K562 (cell line): ENCODE measurements at regions of chr2 and their contacts with region 1.

Region 1: DNA sequence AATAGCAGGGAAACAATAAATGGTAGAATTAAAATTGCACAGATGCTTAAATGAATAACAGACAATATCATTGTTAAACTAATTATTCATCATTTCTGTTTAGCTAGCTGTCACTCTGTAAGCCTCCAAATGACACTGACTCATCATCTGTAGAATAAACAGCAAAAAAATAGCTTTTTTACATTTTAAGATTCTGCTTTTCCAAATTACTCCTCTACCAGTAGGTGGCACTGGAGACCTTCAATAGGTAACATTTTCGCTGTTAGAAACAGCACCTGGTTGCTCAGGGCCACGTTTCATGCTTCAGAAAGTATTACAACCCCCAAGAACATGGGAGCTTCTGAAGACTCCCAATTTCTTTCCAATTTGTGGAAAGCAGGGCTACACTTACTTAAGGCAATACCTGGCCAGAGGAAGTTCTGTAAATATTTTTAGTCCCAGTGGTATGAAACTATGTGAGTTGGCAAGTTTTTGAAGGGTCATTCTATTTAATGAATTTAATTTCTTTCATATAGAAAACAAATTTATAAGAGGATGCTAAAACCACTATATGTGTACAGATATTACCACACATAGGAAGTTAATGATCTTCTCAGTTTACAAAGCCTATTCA is 45.4 kb downstream of the TTN start:
- DNase-seq: peak; percentile 35 to 73 (median 46)
- ATAC-seq: peak; percentile 87
- H3K4me3 ChIP-seq: no peak overlapping the region
- H3K27ac ChIP-seq: no peak overlapping the region
- H3K4me1 ChIP-seq: no peaks in the 10 kb centered on the region
- H3K27me3 ChIP-seq: no peaks in the 10 kb centered on the region; a peak in 1 of 5 replicates
- CTCF ChIP-seq: peak; percentile 72 to 95 (median 82)
- EP300 ChIP-seq: no peak
- POLR2A ChIP-seq: no peak
- RAD21 ChIP-seq: peak; percentile 84 to 90

Region 2: DNA sequence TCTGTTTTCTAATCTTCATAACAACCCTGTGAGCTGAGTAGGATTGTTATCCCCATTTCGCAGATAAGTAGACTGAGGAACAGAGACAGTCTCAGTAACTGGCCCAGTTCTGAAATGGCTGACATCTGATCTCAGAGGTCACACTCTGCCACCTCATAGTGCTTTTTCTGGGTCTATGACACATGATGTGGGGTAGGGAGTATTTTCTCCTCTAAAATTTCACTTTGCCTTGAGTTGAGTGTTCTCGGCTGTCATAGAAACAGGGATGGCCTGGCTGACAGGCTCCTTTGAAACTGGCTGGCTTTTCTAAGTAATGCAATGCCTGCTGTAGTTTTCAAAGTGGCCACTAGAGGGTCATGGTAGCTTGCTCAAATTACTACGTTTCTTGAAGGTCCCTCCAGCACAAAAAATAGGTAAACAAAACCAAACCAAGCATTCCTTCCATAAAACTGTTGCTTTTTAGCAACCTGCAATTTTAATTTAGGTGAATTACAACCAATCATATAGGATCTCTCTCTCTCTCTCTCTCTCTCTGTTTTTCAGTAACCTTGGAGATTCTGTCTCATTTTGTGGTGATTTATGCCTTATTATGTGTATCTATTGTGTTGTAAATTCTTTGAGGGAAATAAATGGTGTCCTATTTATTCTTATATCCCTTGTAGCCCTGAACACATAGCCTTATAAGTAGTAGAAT is 129.5 kb after region 1 on chr2:
- CTCF ChIA-PET with region 1: no interaction called
- POLR2A ChIA-PET with region 1: no interaction called
- in situ Hi-C with region 1: no loop called
- intact Hi-C with region 1: loop called (anchors 2 kb)
- DNase-seq: peak; percentile 43 to 73 (median 71)
- ATAC-seq: peak; percentile 95
- H3K4me3 ChIP-seq: no peak overlapping the region
- H3K27ac ChIP-seq: no peak overlapping the region
- H3K4me1 ChIP-seq: no peaks in the 10 kb centered on the region
- H3K27me3 ChIP-seq: no peaks in the 10 kb centered on the region
- CTCF ChIP-seq: peak; percentile 71 to 89 (median 84)
- EP300 ChIP-seq: no peak
- POLR2A ChIP-seq: no peak
- RAD21 ChIP-seq: peak; percentile 60 to 76

Region 3: DNA sequence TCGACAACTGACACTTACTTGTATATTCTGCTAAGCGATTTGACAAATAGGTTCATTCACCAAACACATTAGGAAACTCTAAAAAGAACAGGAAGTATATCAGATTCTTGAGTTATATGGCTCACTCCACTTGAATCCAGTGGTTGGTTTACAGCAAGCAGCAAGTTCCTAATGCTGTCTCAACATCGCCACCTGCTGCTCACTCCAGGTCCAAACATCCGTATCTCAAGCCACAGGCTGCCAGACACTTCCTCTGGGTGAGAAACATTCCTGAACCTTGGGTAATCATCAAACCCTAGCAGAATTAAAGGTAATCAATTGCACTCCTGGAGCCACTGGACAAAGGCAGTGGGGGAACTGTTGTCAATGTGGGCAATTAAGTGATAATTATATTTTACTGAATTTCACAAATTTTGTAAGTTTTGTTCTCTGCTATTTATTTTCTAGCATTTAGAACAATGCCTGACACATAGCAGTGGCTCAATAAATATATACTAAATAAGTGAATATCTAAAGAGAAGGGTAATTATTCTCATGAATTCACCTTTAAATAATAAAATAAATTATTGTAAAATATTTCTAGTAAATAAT is 152.5 kb after region 1 on chr2:
- CTCF ChIA-PET with region 1: interaction called, 6 read pairs
- POLR2A ChIA-PET with region 1: no interaction called
- in situ Hi-C with region 1: no loop called
- intact Hi-C with region 1: loop called (anchors 1 kb)
- DNase-seq: peak; percentile 65 to 83 (median 72)
- ATAC-seq: peak; percentile 99
- H3K4me3 ChIP-seq: no peak overlapping the region
- H3K27ac ChIP-seq: no peak overlapping the region
- H3K4me1 ChIP-seq: no peaks in the 10 kb centered on the region
- H3K27me3 ChIP-seq: no peaks in the 10 kb centered on the region
- CTCF ChIP-seq: peak; percentile 85 to 89 (median 87)
- EP300 ChIP-seq: no peak
- POLR2A ChIP-seq: no peak
- RAD21 ChIP-seq: peak; percentile 77 to 85

Region 4: DNA sequence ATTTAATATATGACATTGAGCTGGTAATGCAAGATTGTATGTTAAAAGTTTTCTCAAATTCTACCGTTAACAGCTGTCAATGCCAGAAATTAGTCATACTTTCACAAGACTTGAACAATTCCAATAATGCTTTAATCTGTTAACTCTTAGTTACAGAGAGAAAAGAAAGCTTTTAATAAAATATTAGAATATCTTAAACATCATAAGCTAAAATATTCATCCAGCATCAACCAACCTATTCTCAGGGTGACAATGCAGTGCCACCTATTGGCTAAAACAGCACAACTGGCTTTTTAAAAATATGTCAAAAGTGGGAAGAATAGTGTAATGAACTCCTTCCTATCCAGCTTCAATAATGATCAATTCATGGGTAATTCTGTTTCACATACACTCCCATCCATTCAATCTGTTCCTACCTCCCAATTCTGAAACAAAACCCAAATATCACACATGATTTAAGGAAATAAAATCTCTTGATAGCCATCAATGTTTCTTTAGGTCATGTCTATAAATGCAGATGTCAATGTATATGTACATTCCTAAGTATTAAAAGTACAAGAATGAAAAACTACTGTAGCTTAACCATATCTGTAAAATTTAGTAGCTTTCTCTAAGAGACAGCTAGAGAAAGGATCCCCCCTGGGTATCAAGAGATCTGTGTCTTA is 367.8 kb after region 1 on chr2:
- CTCF ChIA-PET with region 1: interaction called, 6 read pairs
- POLR2A ChIA-PET with region 1: no interaction called
- in situ Hi-C with region 1: no loop called
- intact Hi-C with region 1: loop called (anchors 10 kb)
- DNase-seq: peak in 2 of 4 experiments; percentile 9 to 11
- ATAC-seq: no peak; the same call in 2 of the 3 replicates
- H3K4me3 ChIP-seq: no peak overlapping the region
- H3K27ac ChIP-seq: no peak overlapping the region
- H3K4me1 ChIP-seq: no peaks in the 10 kb centered on the region
- H3K27me3 ChIP-seq: no peaks in the 10 kb centered on the region
- CTCF ChIP-seq: peak; percentile 26 to 48 (median 40); a peak in 4 of 6 replicates
- EP300 ChIP-seq: no peak
- POLR2A ChIP-seq: no peak
- RAD21 ChIP-seq: peak; percentile 60